Panc1 (cell line): ENCODE measurements at regions of chr17 and their contacts with region 1.

Region 1: DNA sequence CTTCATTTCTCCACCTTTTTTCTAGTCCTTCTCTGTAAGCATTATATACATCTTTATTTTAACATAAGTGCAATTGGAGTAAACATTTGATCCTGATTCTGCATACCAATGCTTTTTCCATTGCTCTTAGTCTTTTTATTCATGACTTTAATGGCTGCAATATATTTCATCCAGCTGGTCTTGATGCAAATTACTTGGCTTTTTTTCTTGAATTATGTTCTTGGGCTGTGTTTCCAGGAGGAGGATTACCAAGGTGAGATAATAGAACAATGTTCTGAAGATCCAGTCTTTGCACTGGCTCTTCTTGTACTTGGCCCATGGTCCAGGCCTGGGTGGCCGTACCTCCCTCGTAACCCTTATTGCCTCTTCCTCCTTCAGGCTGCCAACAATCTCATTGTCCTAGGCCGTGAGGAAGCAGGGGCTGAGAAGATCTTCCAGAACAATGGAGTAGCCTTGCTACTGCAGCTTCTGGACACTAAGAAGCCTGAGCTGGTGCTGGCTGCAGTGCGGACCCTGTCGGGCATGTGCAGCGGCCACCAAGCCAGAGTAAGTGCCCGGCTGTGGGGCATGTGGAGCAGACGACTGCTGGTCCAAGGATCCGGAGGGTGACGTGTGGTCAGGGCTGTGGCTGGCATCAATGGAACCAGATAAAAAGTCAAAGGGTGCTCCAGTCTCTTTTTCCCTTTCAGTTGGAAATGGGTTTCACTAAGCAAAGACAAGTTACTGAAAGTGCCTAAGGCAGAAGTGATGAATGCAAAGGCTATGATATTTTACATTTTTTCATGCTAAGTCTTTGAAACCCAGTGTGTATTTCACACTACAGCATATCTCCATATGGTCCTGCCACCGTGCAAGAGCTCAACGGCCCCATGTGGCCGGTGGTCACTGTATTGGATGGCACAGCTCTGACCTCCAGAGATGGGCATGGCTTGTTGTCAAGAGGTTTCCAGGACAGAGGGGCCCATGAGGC is 6.9 kb downstream of the UNC45B start:
- DNase-seq: no peak
- ATAC-seq: no peak
- H3K4me3 ChIP-seq: no peak overlapping the region
- H3K27ac ChIP-seq: no peak overlapping the region
- H3K4me1 ChIP-seq: no peaks in the 10 kb centered on the region
- H3K27me3 ChIP-seq: peaks cover 8% of the 10 kb centered on the region; the same call in 1 of the 2 replicates
- CTCF ChIP-seq: no peak

Region 2: DNA sequence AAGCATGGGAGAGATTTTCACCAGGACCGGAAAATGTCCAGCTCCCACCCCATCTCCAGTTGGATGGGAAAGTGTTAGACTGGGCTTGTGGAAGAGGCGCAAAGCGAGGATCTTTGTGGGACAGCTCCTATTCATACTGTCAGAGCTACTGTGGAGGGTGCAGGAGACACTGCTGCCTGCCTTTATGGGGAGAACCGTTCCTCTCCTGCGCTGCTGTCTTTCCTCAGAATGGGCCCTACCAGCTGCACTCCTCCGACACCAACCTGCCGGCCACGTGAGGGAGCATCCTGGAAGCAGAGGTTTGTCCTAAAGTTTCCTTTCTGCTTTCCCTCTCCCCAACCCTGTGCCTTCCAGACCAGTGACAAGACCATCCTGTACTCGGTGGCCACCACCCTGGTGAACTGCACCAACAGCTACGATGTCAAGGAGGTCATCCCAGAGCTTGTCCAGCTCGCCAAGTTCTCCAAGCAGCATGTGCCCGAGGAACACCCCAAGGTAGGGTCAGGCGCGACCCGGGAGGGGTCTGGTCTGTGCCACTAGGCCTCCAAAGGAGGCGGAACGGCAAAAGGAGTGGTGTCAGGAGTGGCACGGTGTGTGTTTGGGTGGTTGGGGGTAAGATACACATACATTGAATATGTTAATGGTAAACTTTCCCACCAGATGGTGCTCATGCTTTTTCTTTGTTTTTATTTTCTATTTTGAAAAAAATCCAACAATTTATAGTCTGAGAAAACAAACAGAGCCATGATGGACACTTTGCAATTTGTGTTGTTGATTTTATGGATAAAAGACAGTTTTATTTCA is 16.7 kb after region 1 on chr17:
- CTCF ChIA-PET with region 1: no interaction called
- POLR2A ChIA-PET with region 1: no interaction called
- in situ Hi-C with region 1: no loop called
- intact Hi-C with region 1: no loop called
- DNase-seq: no peak
- ATAC-seq: peak; percentile 75; the same call in 1 of the 2 replicates
- H3K4me3 ChIP-seq: no peak overlapping the region
- H3K27ac ChIP-seq: no peak overlapping the region
- H3K4me1 ChIP-seq: no peaks in the 10 kb centered on the region
- H3K27me3 ChIP-seq: no peaks in the 10 kb centered on the region; the same call in 1 of the 2 replicates
- CTCF ChIP-seq: no peak

Region 3: DNA sequence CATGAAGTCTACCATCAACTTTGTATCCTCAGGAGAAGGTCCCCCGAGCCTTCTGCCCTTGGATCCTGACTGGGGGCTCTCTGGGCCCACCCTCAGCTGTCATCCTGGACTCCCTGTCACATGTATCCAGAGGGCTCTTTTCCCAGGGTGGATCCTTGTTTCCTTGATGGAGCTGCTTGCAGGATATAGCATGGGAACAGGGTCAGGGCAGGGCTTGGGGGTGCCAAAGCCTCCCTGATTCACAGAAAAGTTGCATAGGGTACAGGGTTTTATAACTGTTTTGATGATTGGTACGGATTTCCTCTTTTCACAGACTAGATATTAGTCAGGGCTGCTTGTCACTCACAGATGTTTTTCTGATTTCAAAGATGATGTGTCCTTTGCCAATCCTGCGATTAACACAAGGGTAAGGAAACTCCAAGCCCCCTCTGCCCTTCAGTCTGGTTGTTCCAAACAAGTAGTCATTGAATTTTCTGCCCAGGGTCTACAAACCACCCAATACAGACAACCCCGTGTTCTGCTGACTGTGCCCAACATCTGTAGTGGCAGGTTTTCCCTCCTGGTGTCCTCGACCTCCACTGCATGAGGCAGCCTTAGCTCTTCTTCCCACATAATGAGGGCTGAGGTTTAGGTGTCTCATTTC is 60.3 kb after region 1 on chr17:
- CTCF ChIA-PET with region 1: no interaction called
- POLR2A ChIA-PET with region 1: no interaction called
- in situ Hi-C with region 1: no loop called
- intact Hi-C with region 1: loop called (anchors 10 kb)
- DNase-seq: no peak
- ATAC-seq: no peak
- H3K4me3 ChIP-seq: no peak overlapping the region
- H3K27ac ChIP-seq: no peak overlapping the region
- H3K4me1 ChIP-seq: no peaks in the 10 kb centered on the region
- H3K27me3 ChIP-seq: peaks cover 3% of the 10 kb centered on the region; the same call in 1 of the 2 replicates
- CTCF ChIP-seq: no peak

Region 4: DNA sequence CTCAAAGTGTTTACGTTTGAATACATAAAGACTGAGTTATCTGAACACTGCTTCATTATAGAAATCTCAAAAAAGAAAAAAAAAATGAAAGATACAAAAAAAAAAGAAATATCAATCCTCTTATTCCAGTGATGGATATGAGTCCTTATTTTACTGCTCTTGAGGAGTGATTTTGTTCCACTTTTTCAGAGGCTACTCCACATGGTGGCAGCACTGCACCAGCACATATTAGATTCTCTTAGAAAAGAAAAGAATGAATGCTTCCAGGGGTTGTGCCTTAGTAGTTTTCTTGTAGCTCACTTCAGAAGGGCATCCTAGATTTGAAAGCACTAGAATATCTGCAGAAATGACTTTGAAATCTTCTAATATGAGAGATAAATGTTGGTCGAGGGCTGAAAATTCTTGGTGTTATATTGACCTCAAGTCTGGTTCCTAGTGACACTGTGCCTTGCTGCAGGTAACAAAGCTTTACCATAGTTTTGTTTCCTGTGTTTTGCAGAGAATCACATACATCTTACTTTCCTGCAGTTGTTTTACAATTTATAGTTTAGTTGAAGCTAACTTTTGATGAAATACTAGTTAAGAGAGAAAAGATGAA is 458.5 kb after region 1 on chr17:
- CTCF ChIA-PET with region 1: no interaction called
- POLR2A ChIA-PET with region 1: no interaction called
- in situ Hi-C with region 1: no loop called
- intact Hi-C with region 1: no loop called
- DNase-seq: no peak
- ATAC-seq: peak; percentile 78
- H3K4me3 ChIP-seq: no peak overlapping the region
- H3K27ac ChIP-seq: no peak overlapping the region
- H3K4me1 ChIP-seq: 0 out of 2 replicates have a peak, but pooled peaks cover under 1% of the 10 kb centered on the region
- H3K27me3 ChIP-seq: no peaks in the 10 kb centered on the region
- CTCF ChIP-seq: peak; percentile 77; the same call in 1 of the 2 replicates